Dorsolateral prefrontal cortex (tissue), 120 donors: ENCODE measurements at regions of chr11 and their contacts with region 1.

Region 1: GRCh38 chr11:14892036-14892567 is at the start of gene CYP2R1:
- DNase-seq: peak; percentile 81 to 97 (median 94)
- H3K4me3 ChIP-seq: peak within 1 kb of the TSS; percentile 52 to 100 (median 83)
- H3K27ac ChIP-seq: peak within 1 kb of the TSS in 58 of 59 donors; percentile 58 to 94 (median 86)
- H3K27me3 ChIP-seq: no peaks in the 10 kb centered on the region
- CTCF ChIP-seq: peak in 13 of 56 donors; percentile 7 to 29 (median 16)
- total RNA-seq, gene CYP2R1: 7.2 to 17.8 (median 12.7) TPM

Region 2: GRCh38 chr11:14519917-14520746 is 372.0 kb before region 1 on chr11 and contains the start of gene PSMA1:
- intact Hi-C with region 1: loop called (anchors 5 kb)
- DNase-seq: peak; percentile 86 to 97 (median 94)
- H3K4me3 ChIP-seq: peak within 1 kb of the TSS; percentile 67 to 99 (median 92)
- H3K27ac ChIP-seq: peak within 1 kb of the TSS; percentile 30 to 96 (median 88)
- H3K27me3 ChIP-seq: no peaks in the 10 kb centered on the region
- CTCF ChIP-seq: peak in 53 of 56 donors; percentile 31 to 74 (median 59)
- total RNA-seq, gene PSMA1: 58.7 to 127 (median 94.6) TPM

Region 3: DNA sequence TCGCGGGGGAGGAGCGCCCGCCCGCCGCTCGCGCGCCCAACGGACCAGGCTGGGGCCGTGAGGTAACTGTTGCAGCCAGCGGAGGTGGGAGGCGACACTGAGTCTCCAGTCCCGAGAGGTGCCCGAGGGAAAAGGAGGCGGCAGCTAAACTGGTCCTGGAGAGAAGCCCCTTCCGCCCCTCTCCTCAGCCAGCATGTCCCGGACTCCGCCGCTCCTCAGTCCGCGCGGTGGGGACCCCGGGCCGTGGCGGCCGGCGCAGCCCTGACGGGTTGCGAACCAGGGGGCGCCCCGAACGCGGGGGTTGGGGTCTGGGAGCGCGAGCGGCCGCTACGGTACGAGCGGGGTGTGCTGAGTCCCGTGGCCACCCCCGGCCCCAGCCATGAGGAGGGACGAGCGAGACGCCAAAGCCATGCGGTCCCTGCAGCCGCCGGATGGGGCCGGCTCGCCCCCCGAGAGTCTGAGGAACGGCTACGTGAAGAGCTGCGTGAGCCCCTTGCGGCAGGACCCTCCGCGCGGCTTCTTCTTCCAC is 248.3 kb before region 1 on chr11 and contains the start of gene PDE3B:
- intact Hi-C with region 1: loop called (anchors 5 to 10 kb)
- DNase-seq: peak in 9 of 10 donors; percentile 39 to 88 (median 71)
- H3K4me3 ChIP-seq: peak within 1 kb of the TSS; percentile 60 to 92 (median 81)
- H3K27ac ChIP-seq: peak within 1 kb of the TSS in 58 of 59 donors; percentile 26 to 93 (median 84)
- H3K27me3 ChIP-seq: peaks cover 0 to 31% (median 0%) of the 10 kb centered on the region in 45 donors
- CTCF ChIP-seq: peak in 6 of 56 donors; percentile 4 to 22 (median 14)
- total RNA-seq, gene PDE3B: 7.7 to 24.9 (median 14.6) TPM

Region 4: GRCh38 chr11:14927146-14927545 is 35.0 kb after region 1 on chr11:
- intact Hi-C with region 1: no loop called
- DNase-seq: no peak
- H3K4me3 ChIP-seq: no peak overlapping the region
- H3K27ac ChIP-seq: no peak overlapping the region
- H3K27me3 ChIP-seq: peaks cover 0 to 16% (median 0%) of the 10 kb centered on the region in 45 donors
- CTCF ChIP-seq: no peak

Region 5: DNA sequence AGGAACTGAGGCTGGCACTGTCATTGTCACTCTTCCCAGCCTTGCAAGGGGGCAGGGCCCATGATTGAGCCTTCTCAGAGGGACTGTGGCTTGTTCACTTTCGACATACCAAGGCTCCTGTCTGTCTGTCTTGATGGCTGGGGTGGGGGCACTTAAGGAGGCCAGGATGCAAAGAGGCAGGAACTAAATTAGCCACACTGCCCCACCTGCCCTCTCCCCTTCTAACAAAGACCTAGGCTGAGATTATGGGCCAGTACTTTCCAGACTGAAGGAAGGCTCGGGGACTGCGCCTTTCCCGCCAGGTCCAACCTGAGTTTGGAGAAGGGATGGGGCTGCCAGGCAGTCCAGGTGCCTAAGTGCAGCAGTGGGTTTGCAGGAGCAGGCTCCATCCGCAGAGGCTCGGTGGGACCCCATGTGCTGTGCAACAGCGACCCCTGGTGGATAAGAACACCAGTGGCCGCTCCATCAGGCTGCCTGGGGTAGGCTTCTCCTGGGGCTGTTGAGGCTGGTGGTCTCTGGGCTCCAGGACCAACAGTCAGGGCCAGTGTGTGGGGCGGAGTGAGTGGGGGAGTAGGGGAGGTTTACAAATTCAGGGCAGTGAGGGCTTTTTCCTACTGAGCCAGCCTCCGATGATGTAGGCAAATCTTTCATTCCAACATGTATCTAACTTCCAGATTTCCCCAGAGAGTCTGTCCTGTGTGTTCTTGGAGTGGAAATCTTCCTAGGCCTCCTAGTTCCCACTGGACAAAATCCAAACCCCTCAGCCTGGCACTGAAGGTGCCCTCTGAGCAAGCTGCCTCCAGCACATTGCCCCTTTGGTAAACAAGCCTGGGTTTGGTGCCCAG is 316.5 kb after region 1 on chr11:
- intact Hi-C with region 1: no loop called
- DNase-seq: peak; percentile 45 to 91 (median 78)
- H3K4me3 ChIP-seq: no peak overlapping the region
- H3K27ac ChIP-seq: no peak overlapping the region
- H3K27me3 ChIP-seq: peaks cover 0 to 21% (median 0%) of the 10 kb centered on the region in 45 donors
- CTCF ChIP-seq: peak; percentile 75 to 99 (median 96)

Region 6: DNA sequence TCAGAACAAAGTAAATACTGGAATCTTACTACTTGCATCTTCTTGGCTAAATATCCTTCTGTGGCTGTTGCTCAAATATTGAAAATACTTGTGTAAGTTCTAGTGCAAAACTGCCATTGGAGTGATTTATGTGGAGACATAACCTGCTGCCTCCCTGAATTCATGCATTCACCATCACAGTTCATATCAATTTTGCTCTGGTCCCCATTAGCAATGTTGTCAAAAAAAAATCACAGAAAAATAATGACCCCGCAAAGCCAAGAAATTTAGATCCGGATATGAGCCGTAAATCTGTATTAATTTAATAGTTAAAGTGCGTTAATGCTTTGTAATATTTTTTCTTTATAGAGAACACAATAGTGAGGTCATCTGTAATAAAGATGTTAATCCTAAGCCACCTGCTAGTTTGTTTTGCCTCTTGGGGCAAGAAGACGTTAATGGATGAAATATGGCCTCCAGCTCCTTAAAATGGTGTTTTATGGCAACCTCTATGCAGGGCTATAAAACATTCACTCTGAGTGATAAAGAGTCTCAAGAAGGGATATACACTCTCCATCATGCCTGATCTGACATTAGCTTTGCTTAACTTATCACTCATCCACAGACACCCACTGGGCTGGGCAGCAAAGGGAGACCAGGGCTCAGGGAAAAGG is 478.5 kb after region 1 on chr11:
- intact Hi-C with region 1: no loop called
- DNase-seq: no peak
- H3K4me3 ChIP-seq: no peak overlapping the region
- H3K27ac ChIP-seq: no peak overlapping the region
- H3K27me3 ChIP-seq: peaks cover 0 to 34% (median 4%) of the 10 kb centered on the region in 45 donors
- CTCF ChIP-seq: no peak